Activated CD8-positive, alpha-beta T cell treated with anti-CD3 and anti-CD28 coated beads, Interleukin-2, amount 10 ng/mL, durations not matched to agents 7 days and 5 days (primary cell): ENCODE measurements at regions of chr17 and their contacts with region 1.

Region 1: DNA sequence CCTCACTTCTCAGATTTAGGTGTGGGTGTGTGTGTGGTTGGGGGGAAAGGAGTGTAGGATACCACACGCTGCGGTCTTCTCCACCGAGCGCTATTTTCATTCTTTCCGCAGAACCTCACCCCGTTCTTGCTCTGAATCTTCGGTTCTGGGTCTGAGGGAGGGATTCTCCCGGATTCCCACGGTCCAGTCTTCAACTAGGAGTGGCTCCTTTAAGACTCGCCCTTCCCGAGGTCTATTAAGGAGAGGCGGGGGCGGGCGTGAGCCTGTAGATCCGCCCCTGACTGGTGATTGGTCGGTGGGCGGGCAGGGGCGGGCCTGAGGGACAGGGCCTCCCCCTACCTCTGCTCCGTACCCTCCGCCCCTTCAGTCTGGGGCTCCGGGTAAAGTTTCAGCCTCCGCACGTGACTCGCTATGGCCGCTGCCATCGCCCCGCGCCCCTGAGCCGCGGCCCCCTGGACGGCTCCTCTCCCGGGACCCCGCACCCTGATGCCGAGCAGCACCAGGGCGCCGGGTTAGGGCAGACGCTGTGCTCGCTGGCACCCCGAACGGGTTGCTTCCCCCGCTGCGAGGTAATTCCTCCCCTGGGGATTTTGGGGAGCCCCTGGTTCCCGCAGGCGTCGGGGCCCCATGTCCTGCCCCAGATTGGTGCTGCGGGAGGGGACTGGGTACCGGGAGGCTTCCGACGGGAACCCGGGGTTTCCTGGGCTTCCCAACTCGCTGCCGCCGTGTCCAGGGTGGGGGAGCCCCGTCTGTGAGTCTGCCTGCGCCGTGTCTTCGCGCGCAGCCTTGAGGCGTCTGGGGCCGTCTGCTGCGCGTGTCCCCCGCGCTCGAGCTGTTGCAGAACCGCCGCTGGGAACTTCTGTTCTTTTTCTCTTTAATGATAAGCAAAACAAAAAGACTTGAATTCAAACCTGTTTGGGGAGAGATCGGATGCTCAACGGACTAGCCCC is 9.2 kb downstream of the RARA start:
- DNase-seq: peak; percentile 94
- ATAC-seq: peak; percentile 66
- H3K4me3 Mint-ChIP-seq: peak overlapping the region; percentile 95
- H3K27ac Mint-ChIP-seq: peak overlapping the region; percentile 98
- H3K4me1 Mint-ChIP-seq: peaks cover 67% of the 10 kb centered on the region
- H3K27me3 Mint-ChIP-seq: no peaks in the 10 kb centered on the region

Region 2: GRCh38 chr17:40331743-40332641 is 13.8 kb after region 1 on chr17:
- CTCF ChIA-PET with region 1: interaction called, 18 read pairs
- POLR2A ChIA-PET with region 1: interaction called, 7 read pairs
- DNase-seq: peak; percentile 40
- ATAC-seq: no peak
- H3K4me3 Mint-ChIP-seq: peak overlapping the region; percentile 40
- H3K27ac Mint-ChIP-seq: peak overlapping the region; percentile 73
- H3K4me1 Mint-ChIP-seq: peaks cover 84% of the 10 kb centered on the region
- H3K27me3 Mint-ChIP-seq: no peaks in the 10 kb centered on the region

Region 3: GRCh38 chr17:40340880-40341807 is 23.0 kb after region 1 on chr17:
- CTCF ChIA-PET with region 1: interaction called, 6 read pairs
- POLR2A ChIA-PET with region 1: interaction called, 20 read pairs
- DNase-seq: peak; percentile 92
- ATAC-seq: peak; percentile 83
- H3K4me3 Mint-ChIP-seq: peak overlapping the region; percentile 73
- H3K27ac Mint-ChIP-seq: peak overlapping the region; percentile 90
- H3K4me1 Mint-ChIP-seq: peaks cover 86% of the 10 kb centered on the region
- H3K27me3 Mint-ChIP-seq: no peaks in the 10 kb centered on the region

Region 4: DNA sequence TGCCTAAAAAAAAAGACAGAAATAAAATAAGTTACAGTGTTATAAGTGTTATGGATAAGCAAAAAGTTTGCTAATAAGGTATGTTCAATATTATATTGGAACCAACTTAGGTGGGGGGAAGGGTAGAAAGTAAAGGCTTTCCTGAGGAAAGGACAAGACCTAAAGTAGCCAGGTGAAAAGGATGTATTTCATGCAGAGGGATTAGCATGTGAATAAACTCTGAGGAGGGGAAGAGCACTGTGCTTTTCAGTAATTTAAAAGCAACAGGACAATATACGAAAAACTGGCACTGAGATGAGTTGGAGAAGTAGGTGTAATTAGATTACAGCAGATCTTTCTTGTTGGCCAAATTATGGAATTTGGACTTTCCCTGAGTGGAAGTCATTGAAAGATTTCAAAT is 91.9 kb after region 1 on chr17:
- CTCF ChIA-PET with region 1: no interaction called
- POLR2A ChIA-PET with region 1: no interaction called
- DNase-seq: no peak
- ATAC-seq: no peak
- H3K4me3 Mint-ChIP-seq: no peak overlapping the region
- H3K27ac Mint-ChIP-seq: peak overlapping the region; percentile 27
- H3K4me1 Mint-ChIP-seq: peaks cover 41% of the 10 kb centered on the region
- H3K27me3 Mint-ChIP-seq: no peaks in the 10 kb centered on the region